ENCODE measurements at regions of chr5 and their contacts with region 1.

Region 1: DNA sequence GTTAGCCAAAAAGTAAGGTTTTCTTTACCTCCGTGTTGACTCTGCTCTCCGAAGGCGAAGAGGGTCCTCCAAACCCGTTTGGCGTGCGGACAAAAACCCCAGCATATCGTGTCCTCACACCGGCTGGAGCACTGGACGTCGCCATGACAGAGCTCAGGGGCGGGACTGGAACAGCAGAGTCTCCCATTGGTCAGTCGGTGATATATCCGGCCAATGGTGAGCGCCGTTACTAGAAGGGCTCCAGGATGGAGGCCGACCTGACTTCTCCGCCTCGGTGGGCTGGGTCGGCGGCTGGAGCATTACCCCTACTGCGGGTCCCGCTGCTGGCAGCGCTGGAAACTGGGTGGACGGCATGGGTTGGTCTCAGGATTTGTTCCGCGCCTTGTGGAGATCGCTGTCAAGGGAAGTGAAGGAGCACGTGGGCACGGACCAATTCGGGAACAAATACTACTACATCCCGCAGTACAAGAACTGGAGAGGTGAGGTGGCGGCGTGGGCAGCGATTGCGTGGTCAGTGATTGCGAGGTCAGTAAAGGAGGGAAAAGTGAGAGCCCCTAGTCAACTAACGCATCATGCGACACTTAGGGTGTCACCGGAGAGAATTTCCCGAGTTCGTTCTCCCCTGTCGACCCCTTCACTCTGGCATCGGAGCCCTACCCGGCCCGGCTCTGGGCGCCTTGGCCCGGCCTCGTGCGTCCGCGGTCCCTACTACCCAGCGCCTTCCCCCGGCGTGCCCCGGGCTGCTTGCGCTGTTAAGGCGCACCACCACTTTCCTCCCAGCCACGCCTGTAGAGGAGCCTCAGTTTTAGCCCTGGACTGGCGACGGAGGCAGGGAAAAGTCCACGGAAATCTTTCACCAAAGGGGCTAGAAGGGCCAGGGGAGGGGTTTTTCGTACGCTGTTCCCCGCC is at the starts of genes ERCC8 and NDUFAF2:
- DNase-seq: peak; percentile 92
- H3K4me3 Mint-ChIP-seq: no peak within 1 kb of the TSS
- H3K27ac Mint-ChIP-seq: peak within 1 kb of the TSS; percentile 62
- H3K4me1 Mint-ChIP-seq: peaks cover 24% of the 10 kb centered on the region
- H3K27me3 Mint-ChIP-seq: no peaks in the 10 kb centered on the region
- total RNA-seq, gene ERCC8: 7.8 to 9.1 TPM
- total RNA-seq, gene NDUFAF2: 35.6 to 38.5 TPM

Region 2: GRCh38 chr5:60677844-60678664 is 267.1 kb before region 1 on chr5:
- CTCF ChIA-PET with region 1: no interaction called
- intact Hi-C with region 1: loop called (anchors 5 kb)
- DNase-seq: no peak
- H3K4me3 Mint-ChIP-seq: no peak overlapping the region
- H3K27ac Mint-ChIP-seq: no peak overlapping the region
- H3K4me1 Mint-ChIP-seq: peaks cover 2% of the 10 kb centered on the region
- H3K27me3 Mint-ChIP-seq: no peaks in the 10 kb centered on the region

Region 3: DNA sequence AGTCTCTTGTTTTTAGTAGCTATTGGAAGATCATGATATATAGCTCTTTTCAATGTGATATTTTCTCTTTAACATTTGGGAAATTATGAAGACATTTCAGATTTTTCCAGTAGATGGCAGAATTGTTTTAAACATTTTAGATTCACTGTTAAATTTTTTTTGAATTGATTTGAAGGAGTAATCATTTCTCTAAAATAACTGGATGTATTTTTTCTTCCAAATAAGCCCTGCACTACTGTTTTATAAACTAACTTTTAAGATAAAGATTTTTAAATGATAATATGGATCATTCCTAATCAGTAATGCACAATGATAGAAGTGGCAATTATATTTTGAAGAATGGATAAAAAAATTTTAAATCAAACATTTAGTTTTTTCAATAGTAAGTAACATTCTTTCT is 14.0 kb after region 1 on chr5:
- CTCF ChIA-PET with region 1: interaction called, 3 read pairs
- intact Hi-C with region 1: loop called (anchors 1 kb)
- DNase-seq: no peak
- H3K4me3 Mint-ChIP-seq: no peak overlapping the region
- H3K27ac Mint-ChIP-seq: no peak overlapping the region
- H3K4me1 Mint-ChIP-seq: peaks cover 6% of the 10 kb centered on the region
- H3K27me3 Mint-ChIP-seq: no peaks in the 10 kb centered on the region

Region 4: DNA sequence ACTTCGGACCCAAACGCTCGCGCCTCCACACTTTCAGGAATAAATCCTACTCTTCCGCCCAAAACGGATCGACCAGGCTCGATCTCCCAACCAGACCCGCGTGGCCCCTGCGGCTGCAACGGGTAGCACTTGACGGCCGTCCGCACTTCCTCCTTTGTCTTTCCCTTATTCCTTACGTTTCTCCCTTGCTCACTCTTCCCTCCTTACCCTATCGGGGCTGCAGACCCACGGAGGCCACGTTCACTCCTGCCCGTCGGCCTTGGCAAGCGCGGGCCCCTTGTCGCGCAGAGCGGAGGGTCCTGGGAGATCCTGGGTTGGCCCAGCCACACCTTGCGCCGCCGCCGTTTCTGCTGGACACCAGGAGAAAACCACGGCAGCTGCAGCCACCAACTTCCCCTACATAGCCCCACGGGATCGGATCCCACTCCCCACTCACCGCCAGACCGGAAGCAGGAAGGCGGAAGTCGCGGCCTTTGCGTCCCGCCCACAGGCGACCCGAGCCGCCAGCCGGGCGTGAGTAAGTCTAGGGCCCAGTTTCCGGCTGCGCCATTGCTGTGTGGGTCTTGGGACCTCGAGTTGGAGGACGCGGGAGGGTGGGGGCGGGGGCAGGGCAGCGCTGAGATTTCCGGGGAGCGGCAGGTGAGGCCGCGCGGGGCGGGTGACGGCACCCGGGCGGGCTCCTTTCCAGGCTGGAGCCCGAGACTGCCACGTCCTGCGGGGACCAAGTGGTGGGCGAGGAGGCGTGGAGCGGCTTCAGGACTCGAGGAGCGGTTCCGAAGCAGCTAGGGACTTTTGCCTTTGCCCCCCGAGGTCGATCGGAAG is 217.1 kb after region 1 on chr5 and contains the start of gene SMIM15:
- CTCF ChIA-PET with region 1: no interaction called
- intact Hi-C with region 1: loop called (anchors 1 kb)
- DNase-seq: peak; percentile 90
- H3K4me3 Mint-ChIP-seq: peak within 1 kb of the TSS; percentile 97
- H3K27ac Mint-ChIP-seq: peak within 1 kb of the TSS; percentile 95
- H3K4me1 Mint-ChIP-seq: peaks cover 38% of the 10 kb centered on the region
- H3K27me3 Mint-ChIP-seq: no peaks in the 10 kb centered on the region
- total RNA-seq, gene SMIM15: 45.8 to 48.1 TPM

Region 5: GRCh38 chr5:61245486-61245885 is 300.3 kb after region 1 on chr5:
- CTCF ChIA-PET with region 1: no interaction called
- intact Hi-C with region 1: no loop called
- DNase-seq: no peak
- H3K4me3 Mint-ChIP-seq: no peak overlapping the region
- H3K27ac Mint-ChIP-seq: no peak overlapping the region
- H3K4me1 Mint-ChIP-seq: no peaks in the 10 kb centered on the region
- H3K27me3 Mint-ChIP-seq: peaks cover 4% of the 10 kb centered on the region

Measured in activated naive CD4-positive, alpha-beta T cell treated with anti-CD3 and anti-CD28 coated beads for 36 hours (primary cell).